ENCODE measurements at regions of chr5 and their contacts with region 1.

Region 1: DNA sequence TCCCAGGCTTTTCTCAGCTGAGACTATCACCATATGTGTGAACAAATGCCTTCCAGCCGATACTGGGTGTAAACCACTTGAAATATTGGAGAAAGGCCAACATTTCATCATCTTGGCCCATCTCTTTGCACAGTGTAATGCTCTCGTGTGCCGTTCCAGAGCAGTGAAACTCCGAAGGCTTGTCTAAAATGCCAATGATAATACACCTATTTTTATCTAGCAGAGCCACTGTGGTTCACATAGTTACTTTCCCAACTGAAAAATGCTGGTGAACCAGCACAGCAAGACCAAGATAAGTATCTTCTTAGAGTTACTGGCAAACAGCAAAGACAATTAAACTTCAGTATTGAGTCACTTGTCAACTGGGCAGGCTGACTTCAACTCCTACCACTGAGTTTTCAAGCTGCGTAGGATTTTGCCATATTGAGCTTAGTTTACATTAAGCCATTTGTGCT is 379.9 kb upstream of the ACTBL2 start:
- DNase-seq: no peak
- H3K4me3 ChIP-seq: no peak overlapping the region
- H3K27ac ChIP-seq: peak overlapping the region in 31 of 59 donors; percentile 5 to 79 (median 46)
- H3K27me3 ChIP-seq: no peaks in the 10 kb centered on the region
- CTCF ChIP-seq: no peak

Region 2: GRCh38 chr5:57900381-57900944 is 38.0 kb after region 1 on chr5:
- intact Hi-C with region 1: no loop called
- DNase-seq: no peak
- H3K4me3 ChIP-seq: no peak overlapping the region
- H3K27ac ChIP-seq: peak overlapping the region in 18 of 59 donors; percentile 1 to 62 (median 18)
- H3K27me3 ChIP-seq: no peaks in the 10 kb centered on the region
- CTCF ChIP-seq: no peak

Region 3: DNA sequence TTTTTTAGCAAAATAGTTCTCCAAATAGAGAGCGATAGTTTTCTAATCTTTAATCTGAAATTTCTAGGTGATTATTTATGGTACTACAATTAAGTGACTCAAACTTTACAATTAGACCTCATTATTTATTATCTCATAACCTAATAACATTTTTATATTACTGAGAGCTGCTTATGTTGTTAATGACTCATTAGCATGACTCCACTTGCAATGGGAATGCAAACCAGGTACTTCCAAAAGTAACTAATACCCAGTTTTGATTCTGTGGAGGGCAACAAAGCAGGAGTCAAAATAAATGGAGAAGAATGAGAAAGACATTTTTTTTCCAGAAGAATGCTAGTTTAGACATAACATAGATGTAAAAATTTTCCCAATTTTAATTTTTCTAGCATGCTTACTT is 131.4 kb after region 1 on chr5:
- intact Hi-C with region 1: no loop called
- DNase-seq: no peak
- H3K4me3 ChIP-seq: no peak overlapping the region
- H3K27ac ChIP-seq: no peak overlapping the region
- H3K27me3 ChIP-seq: no peaks in the 10 kb centered on the region
- CTCF ChIP-seq: no peak

Region 4: GRCh38 chr5:58016336-58016735 is 153.9 kb after region 1 on chr5:
- intact Hi-C with region 1: no loop called
- DNase-seq: no peak
- H3K4me3 ChIP-seq: no peak overlapping the region
- H3K27ac ChIP-seq: no peak overlapping the region
- H3K27me3 ChIP-seq: no peaks in the 10 kb centered on the region
- CTCF ChIP-seq: no peak

Region 5: DNA sequence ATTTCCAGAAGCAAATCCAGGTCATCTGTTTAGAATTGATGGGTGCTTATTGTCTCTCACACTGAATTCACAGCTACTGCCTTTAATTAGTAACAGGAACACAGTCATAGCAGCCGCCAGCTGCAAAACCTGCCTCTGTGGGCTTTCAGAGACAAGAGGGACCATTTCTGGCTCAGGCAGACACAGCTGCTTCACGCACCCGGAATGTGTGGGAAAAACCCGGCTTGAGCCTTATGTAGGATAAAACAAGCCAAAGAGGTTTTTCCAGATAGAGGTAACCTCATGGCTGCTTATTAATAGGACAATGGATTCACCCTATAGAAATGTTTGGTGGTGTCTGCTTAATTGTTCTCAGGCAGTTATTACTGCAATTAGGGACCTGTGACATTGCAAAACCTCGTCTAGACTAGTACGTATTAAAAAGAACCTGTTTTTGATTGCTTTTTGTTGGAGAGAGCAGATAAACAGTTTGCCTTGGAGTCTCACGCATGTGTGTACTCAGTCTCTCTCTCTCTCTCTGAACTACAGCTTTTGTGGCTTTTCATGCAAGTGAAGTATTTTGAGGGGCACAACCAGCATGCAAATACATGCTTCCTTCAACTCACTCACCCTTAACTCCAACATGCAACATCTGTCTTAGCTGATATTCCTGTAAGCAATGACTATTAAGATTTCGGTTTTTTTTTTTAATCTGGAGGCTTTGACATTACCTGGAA is 294.7 kb after region 1 on chr5:
- intact Hi-C with region 1: loop called in 1 of 2 experiments (anchors 5 kb)
- DNase-seq: peak in 9 of 10 donors; percentile 7 to 81 (median 66)
- H3K4me3 ChIP-seq: peak overlapping the region in 1 of 59 donors; percentile 3
- H3K27ac ChIP-seq: peak overlapping the region in 50 of 59 donors; percentile 0 to 88 (median 61)
- H3K27me3 ChIP-seq: no peaks in the 10 kb centered on the region
- CTCF ChIP-seq: no peak